Heart right ventricle (tissue), 16 donors: ENCODE measurements at regions of chr18 and their contacts with region 1.

Region 1: DNA sequence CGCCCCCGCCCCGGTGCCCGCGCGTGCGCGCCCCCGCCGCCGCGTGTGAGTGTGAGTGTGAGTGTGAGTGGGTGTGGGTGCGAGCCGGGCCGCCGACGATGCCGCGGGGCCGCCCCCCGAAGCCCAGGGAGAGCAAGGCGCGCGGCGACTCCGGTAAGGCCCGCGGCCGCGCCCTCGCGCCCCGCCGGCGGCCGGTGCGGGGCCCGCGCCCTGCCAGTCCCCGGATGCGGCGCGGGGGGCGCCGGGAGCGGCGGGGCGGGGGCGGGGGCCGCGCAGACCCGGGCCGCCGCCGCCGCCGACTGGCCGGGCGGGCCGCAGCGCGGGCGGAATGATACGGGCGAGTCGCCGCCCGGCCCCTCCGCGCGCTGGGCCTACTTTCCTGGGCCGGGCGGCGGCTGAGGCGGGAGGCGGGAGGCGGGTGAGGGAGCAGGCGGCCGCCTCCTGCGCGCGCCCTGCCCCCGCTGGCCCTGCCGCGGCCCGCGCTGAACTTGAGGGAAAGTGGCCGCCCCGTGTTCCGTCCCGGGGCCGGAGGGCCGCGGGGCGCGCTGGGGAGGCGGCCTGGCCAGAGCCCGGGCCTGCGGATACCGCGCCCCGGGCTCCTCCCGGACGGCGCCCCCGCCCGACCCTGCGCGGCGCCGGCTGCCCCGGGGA is at the start of gene ZNF236:
- DNase-seq: peak; percentile 77 to 79
- ATAC-seq: peak; percentile 62 to 84 (median 78)
- H3K4me3 ChIP-seq: peak within 1 kb of the TSS; percentile 65 to 98 (median 89)
- H3K27ac ChIP-seq: peak within 1 kb of the TSS; percentile 95 to 99 (median 98)
- H3K4me1 ChIP-seq: peaks cover 3 to 42% (median 30%) of the 10 kb centered on the region in 9 donors
- H3K27me3 ChIP-seq: no peaks in the 10 kb centered on the region
- CTCF ChIP-seq: no peak
- total RNA-seq, gene ZNF236: 8.3 to 14.9 (median 12.8) TPM

Region 2: GRCh38 chr18:76467371-76468190 is 355.1 kb before region 1 on chr18:
- intact Hi-C with region 1: loop called in 1 of 10 experiments (anchors 5 kb)
- DNase-seq: peak in 1 of 2 donors; percentile 56
- ATAC-seq: peak in 6 of 8 donors; percentile 49 to 75 (median 66)
- H3K4me3 ChIP-seq: peak overlapping the region in 3 of 10 donors; percentile 5 to 33 (median 8)
- H3K27ac ChIP-seq: peak overlapping the region in 2 of 10 donors; percentile 30 to 65
- H3K4me1 ChIP-seq: peaks cover 7 to 43% (median 15%) of the 10 kb centered on the region in 9 donors
- H3K27me3 ChIP-seq: no peaks in the 10 kb centered on the region
- CTCF ChIP-seq: no peak